ENCODE measurements at regions of chr2 and their contacts with region 1.

Region 1: GRCh38 chr2:130385709-130386108 is 29.9 kb downstream of the PTPN18 start:
- DNase-seq: no peak
- H3K4me3 ChIP-seq: no peak overlapping the region
- H3K27ac ChIP-seq: no peak overlapping the region
- H3K4me1 ChIP-seq: no peaks in the 10 kb centered on the region
- H3K27me3 ChIP-seq: no peaks in the 10 kb centered on the region
- CTCF ChIP-seq: no peak
- POLR2A ChIP-seq: no peak

Region 2: DNA sequence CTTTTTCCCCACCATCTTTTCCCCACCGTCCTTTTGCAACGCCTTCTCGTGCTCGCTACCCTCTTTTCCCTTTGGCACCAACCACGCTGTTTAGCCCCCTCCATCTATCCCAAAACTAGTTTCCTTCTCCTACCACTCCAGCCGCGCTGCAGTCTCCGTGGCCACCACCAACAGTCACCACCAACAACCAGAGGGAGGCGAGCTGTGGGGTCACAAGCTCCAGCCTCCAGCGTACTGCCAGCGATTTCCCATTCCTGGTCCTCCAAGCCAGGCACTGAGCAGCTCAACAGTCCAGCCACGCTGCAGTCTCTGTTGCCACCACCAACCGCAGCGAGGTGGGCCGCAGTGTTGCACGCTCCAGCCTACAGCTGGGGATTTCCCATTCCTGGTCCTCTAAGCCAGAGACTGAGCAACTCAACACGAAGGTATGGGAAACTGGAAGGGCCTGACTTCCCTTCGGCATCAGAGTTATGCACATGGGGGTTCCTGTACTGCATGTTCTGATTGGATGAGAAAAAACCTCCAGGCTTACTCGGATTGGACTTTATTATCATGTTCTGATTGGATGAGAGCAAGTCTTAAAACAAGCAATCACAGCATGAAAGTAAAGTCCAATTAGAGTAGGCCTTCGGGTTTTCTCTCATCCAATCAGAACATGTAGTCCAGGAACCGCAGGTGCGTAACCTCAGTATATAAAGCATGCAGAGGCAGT is 85.3 kb before region 1 on chr2:
- CTCF ChIA-PET with region 1: no interaction called
- POLR2A ChIA-PET with region 1: no interaction called
- dilution Hi-C with region 1: no loop called
- intact Hi-C with region 1: no loop called
- DNase-seq: no peak
- H3K4me3 ChIP-seq: no peak overlapping the region
- H3K27ac ChIP-seq: no peak overlapping the region
- H3K4me1 ChIP-seq: no peaks in the 10 kb centered on the region
- H3K27me3 ChIP-seq: peaks cover 2 to 9% of the 10 kb centered on the region in 2 experiments
- CTCF ChIP-seq: no peak
- POLR2A ChIP-seq: no peak

Region 3: GRCh38 chr2:130372055-130372832 is 13.5 kb before region 1 on chr2:
- CTCF ChIA-PET with region 1: interaction called, 9 read pairs
- POLR2A ChIA-PET with region 1: no interaction called
- dilution Hi-C with region 1: no loop called
- intact Hi-C with region 1: loop called (anchors 2 kb)
- DNase-seq: peak; percentile 54
- H3K4me3 ChIP-seq: peak overlapping the region; percentile 47 to 79 (median 72)
- H3K27ac ChIP-seq: peak overlapping the region; percentile 76
- H3K4me1 ChIP-seq: peaks cover 14% of the 10 kb centered on the region
- H3K27me3 ChIP-seq: no peaks in the 10 kb centered on the region
- CTCF ChIP-seq: peak; percentile 75 to 76
- POLR2A ChIP-seq: peak; percentile 56

Region 4: DNA sequence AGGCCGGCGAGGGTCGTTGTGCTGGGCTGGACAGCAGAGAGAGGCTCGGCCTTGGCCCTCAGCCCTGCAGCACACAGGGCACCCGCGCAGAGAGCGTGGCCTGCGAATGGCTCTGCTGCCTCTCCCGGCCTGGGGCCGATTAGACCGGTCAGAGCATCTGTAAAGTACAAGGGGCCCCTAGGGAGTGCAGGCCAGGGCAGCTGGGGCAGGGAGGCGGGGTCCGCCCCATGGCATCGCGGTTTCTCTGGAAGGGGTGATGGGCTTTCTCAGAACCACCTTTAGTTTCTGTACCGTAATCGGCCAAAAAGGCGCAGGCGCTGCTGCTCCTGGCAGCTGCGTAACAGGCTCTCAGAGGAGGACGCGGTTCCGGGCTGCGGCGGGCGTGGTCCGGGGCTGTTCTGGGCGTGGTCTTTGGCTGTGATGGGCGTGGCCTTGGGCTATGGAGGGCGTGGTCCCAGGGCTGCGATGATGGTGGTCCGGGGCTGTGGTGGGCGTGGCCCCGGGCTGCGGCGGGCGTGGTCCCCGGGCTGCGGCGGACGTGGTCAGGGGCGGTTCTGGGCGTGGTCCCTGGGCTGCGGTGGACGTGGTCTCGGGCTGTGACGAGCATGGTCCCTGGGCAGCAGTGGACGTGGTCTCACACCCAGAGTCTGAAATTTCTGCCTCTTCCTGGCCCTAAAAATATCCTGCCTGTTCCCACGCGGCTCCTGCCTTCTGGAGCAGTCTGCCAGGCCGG is 341.7 kb after region 1 on chr2:
- CTCF ChIA-PET with region 1: no interaction called
- POLR2A ChIA-PET with region 1: no interaction called
- dilution Hi-C with region 1: no loop called
- intact Hi-C with region 1: no loop called
- DNase-seq: peak; percentile 72
- H3K4me3 ChIP-seq: peak overlapping the region; percentile 30 to 47 (median 33)
- H3K27ac ChIP-seq: no peak overlapping the region
- H3K4me1 ChIP-seq: peaks cover 8% of the 10 kb centered on the region
- H3K27me3 ChIP-seq: no peaks in the 10 kb centered on the region
- CTCF ChIP-seq: peak in 1 of 2 donors; percentile 8
- POLR2A ChIP-seq: peak; percentile 40

Measured in endothelial cell of umbilical vein (primary cell).